ENCODE measurements at regions of chr6 and their contacts with region 1.

Region 1: DNA sequence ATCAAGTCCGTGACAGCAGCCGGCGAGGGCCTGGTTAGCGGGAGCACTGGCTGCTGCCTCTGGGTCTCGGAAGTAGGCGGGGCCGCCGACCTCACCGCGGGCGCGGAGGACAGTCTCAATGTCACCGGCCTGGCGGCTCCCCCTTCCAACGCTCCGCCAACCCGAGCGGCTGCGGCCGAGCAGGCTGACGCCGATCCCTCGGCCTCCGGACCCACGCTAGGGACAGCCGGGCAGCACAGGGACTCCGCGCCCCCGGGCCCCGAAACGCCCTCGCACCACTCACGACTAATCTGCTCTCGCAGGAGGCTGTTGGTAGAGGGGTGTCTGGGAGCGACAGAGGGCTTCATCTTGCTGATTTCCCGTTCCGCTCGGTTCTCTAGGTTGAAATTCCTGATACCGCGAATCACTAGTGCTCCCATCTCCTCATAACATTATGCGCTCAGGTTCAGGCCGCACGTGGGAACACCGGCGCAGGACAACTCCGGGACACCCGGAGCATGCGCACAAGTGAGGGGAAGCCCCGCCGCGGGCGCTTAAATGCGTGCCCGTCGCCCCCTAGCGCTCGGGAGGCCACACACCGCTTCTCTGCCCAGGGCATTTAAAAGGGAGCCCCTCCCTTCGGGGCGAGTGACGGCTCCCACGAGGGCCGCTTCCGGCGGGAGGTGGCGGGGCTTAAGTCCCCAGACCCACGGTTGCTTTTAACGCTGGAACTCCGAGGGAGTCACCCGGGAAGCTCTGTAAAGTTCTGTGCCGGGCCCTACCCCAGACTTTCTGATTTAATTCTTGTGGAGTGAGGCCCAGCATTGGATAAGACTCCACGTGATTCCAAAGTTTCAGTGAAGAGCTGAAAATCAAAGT is at the start of gene NDUFAF4:
- DNase-seq: peak; percentile 99
- H3K4me3 Mint-ChIP-seq: peak within 1 kb of the TSS; percentile 85
- H3K27ac Mint-ChIP-seq: peak within 1 kb of the TSS; percentile 96
- H3K4me1 Mint-ChIP-seq: peaks cover 16% of the 10 kb centered on the region
- H3K27me3 Mint-ChIP-seq: peaks cover 8% of the 10 kb centered on the region
- total RNA-seq, gene NDUFAF4: 71.8 and 74.4 TPM in 2 replicates

Region 2: GRCh38 chr6:96521644-96522464 is 375.8 kb before region 1 on chr6 and contains the start of gene UFL1:
- intact Hi-C with region 1: loop called (anchors 1 kb)
- DNase-seq: peak; percentile 98
- H3K4me3 Mint-ChIP-seq: peak within 1 kb of the TSS; percentile 98
- H3K27ac Mint-ChIP-seq: peak within 1 kb of the TSS; percentile 99
- H3K4me1 Mint-ChIP-seq: peaks cover 16% of the 10 kb centered on the region
- H3K27me3 Mint-ChIP-seq: no peaks in the 10 kb centered on the region
- total RNA-seq, gene UFL1: 25.1 and 26.9 TPM in 2 replicates

Region 3: DNA sequence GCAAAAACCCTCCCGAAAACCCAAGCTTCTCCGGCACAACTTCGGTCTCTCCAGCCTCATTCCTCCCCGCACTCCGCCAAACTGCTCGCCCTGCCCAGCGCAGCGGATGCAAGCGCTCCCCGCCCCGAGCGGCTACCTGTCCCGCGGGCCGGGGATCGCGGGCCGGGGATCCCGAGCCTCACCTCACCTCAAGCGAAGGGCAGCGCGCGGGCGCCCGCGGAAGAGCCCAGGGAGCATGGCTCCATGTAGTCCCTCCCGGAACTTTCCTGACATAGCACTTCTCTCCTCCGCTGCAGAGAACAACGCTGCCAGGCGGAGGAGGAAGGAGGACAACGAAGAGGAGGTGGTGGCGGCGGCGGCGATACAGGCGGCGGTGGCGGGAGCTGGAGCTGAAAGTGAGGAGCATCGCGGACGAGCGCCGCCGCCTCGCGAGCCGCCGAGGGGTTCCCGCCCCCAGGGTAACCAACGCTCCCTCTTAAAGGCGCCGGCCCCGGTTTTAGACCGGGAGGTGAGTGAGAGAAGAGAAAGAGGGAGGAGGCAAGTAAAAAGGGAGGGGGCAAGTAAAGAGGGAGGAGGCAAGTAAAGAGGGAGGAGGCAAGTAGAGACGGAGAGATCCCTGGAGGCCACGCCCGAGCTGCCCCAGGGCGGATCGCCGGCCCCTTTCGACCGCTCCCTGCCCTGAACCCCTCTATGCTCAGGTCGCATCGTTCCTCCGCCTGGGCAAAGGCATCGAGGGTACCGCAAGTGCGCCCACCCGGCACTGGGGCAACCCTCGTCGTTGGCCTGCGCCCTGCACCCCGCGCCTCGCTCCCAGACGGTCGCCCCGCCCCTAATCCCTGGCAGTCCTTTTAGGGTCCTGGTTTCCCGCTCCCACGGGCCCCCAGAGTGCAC is 60.3 kb before region 1 on chr6 and contains the start of gene GPR63:
- intact Hi-C with region 1: loop called (anchors 1 kb)
- DNase-seq: peak; percentile 96
- H3K4me3 Mint-ChIP-seq: peak within 1 kb of the TSS; percentile 92
- H3K27ac Mint-ChIP-seq: peak within 1 kb of the TSS; percentile 75
- H3K4me1 Mint-ChIP-seq: peaks cover 25% of the 10 kb centered on the region
- H3K27me3 Mint-ChIP-seq: peaks cover 49% of the 10 kb centered on the region
- total RNA-seq, gene GPR63: 2.2 and 2.7 TPM in 2 replicates

Region 4: DNA sequence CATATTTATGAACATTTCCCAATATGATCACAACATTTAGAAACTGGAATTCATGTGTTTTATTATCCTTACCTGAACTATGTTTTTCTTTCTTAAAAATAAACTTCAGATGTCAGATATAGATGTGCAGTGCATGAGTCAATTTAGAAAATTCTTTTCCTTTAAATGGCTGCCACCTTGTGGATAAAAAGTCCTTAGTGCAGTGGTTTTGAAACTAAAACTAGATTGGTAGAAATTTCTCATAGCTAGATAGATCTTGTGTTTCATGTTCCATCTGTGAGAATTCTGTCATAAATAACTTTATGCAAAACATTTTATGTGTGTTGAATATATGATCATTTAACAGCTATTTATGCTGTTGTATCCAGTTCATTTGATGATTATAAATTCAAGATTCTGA is 161.9 kb after region 1 on chr6:
- intact Hi-C with region 1: loop called (anchors 1 kb)
- DNase-seq: peak; percentile 54
- H3K4me3 Mint-ChIP-seq: no peak overlapping the region
- H3K27ac Mint-ChIP-seq: no peak overlapping the region
- H3K4me1 Mint-ChIP-seq: no peaks in the 10 kb centered on the region
- H3K27me3 Mint-ChIP-seq: peaks cover 2% of the 10 kb centered on the region

Region 5: GRCh38 chr6:97394160-97394748 is 496.6 kb after region 1 on chr6:
- intact Hi-C with region 1: loop called (anchors 5 kb)
- DNase-seq: peak; percentile 84
- H3K4me3 Mint-ChIP-seq: no peak overlapping the region
- H3K27ac Mint-ChIP-seq: no peak overlapping the region
- H3K4me1 Mint-ChIP-seq: no peaks in the 10 kb centered on the region
- H3K27me3 Mint-ChIP-seq: peaks cover 14% of the 10 kb centered on the region